ENCODE measurements at regions of chr3 and their contacts with region 1.

Region 1: GRCh38 chr3:126259411-126260391 is 79.3 kb upstream of the ALDH1L1 start:
- DNase-seq: no peak
- H3K4me3 ChIP-seq: no peak overlapping the region
- H3K27ac ChIP-seq: no peak overlapping the region
- H3K4me1 ChIP-seq: no peaks in the 10 kb centered on the region
- H3K27me3 ChIP-seq: no peaks in the 10 kb centered on the region
- CTCF ChIP-seq: peak in 2 of 3 experiments; percentile 40 to 55
- POLR2A ChIP-seq: no peak

Region 2: GRCh38 chr3:126245811-126246727 is 13.6 kb before region 1 on chr3:
- intact Hi-C with region 1: no loop called
- DNase-seq: no peak
- H3K4me3 ChIP-seq: no peak overlapping the region
- H3K27ac ChIP-seq: no peak overlapping the region
- H3K4me1 ChIP-seq: no peaks in the 10 kb centered on the region
- H3K27me3 ChIP-seq: no peaks in the 10 kb centered on the region
- CTCF ChIP-seq: peak in 1 of 3 experiments; percentile 39
- POLR2A ChIP-seq: no peak

Region 3: DNA sequence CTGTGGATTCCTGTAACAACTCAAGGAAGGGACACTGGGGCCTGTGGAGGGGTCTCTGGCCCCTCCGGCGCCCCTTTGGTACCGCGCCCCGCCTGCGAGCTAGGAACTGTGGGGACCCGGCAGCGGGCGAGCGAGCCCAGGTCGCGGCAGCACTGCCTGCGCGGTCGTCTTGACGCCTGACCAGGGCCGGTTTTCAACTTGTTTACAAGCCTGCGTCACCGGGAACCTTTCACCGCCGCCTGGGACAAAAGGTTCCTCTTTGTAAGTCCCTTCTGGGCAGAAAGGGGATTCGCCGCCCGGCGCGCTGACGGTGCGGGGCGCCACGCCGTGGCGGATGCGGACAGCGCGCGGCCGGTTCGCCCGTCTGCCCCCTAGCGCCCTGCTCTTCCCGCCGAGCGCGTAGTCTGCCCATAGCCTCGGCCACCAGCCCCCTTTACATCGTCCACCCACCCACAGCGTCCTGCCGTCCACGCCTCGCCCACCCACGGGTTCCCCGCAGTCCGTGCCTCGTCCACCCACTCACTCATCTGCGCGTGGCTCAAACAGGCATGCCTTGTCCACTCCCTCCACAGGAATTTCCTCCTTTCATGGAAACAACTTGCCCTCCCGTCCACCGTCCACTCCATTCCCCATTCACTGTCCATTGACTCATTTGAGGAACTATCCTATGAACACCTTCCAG is 129.6 kb after region 1 on chr3:
- intact Hi-C with region 1: loop called (anchors 2 kb)
- DNase-seq: peak in 1 of 2 donors; percentile 95
- H3K4me3 ChIP-seq: peak overlapping the region; percentile 24 to 36
- H3K27ac ChIP-seq: peak overlapping the region; percentile 62
- H3K4me1 ChIP-seq: peaks cover 5% of the 10 kb centered on the region
- H3K27me3 ChIP-seq: no peaks in the 10 kb centered on the region
- CTCF ChIP-seq: peak; percentile 97 to 100 (median 98)
- POLR2A ChIP-seq: peak in 1 of 2 donors; percentile 36